ENCODE measurements at regions of chr5 and their contacts with region 1.

Region 1: DNA sequence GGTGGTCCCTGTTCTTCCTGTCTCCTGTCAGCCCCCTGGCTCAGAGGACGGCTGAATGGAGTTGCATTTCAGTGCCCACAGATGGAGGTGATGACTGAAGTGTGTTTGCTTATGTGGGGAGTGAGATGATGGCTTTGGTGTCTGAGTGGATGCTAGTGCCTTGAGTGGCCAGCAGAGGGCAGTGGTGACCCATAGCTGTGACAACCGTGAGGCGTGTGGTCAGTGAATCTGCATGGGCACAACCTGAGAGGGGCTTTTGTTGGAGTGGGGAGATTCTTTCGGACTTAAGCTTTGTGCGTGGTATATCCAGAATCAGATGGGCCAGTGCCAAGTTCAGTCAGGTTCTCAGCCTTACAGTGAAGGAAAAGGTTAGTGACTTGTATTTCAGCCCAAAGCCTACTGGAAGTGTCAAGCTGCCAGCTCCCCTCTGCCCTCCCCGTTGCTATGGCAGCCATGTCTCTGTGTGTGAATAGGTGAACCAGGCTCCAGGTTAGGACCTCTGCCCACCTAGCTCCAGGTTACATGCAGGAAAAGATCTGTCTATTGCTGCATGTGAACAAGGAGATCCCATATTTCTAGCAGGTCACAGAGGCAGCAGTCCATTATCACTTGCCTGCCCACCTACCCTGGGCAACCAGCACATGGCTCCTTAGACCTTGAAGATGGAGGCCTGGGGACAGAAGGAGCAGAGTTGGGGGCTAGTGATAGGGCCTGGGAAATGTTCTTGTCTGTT is 14.7 kb upstream of the CXXC5 start:
- DNase-seq: peak; percentile 54
- H3K4me3 ChIP-seq: no peak overlapping the region
- H3K27ac ChIP-seq: no peak overlapping the region
- H3K4me1 ChIP-seq: peaks cover 11% of the 10 kb centered on the region
- H3K27me3 ChIP-seq: no peaks in the 10 kb centered on the region
- CTCF ChIP-seq: peak; percentile 97 to 99 (median 98)
- POLR2A ChIP-seq: no peak

Region 2: DNA sequence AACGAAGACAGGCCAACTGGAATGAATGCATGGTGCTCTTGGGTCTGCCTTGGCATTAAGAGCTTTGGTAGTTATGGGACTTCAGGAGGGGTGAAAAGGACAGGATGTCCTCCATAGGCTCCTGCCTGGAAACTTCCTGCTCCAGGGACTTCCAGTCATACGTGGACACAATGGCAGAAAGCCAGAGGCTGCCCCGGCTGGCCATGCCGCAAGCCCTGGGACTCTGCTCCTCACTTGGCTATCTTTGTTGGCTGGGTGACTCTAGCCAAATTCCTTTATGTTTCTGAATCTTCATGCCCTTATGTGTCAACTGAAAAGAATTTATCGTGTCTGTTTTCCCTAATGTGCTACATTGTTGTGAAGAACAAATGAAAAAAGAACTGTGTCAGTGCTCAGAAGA is 572.2 kb before region 1 on chr5:
- intact Hi-C with region 1: no loop called
- DNase-seq: peak; percentile 18
- H3K4me3 ChIP-seq: no peak overlapping the region
- H3K27ac ChIP-seq: no peak overlapping the region
- H3K4me1 ChIP-seq: peaks cover 3% of the 10 kb centered on the region
- H3K27me3 ChIP-seq: no peaks in the 10 kb centered on the region
- CTCF ChIP-seq: no peak
- POLR2A ChIP-seq: no peak

Region 3: GRCh38 chr5:139690064-139690802 is 56.8 kb after region 1 on chr5:
- intact Hi-C with region 1: loop called (anchors 1 kb)
- DNase-seq: no peak
- H3K4me3 ChIP-seq: no peak overlapping the region
- H3K27ac ChIP-seq: no peak overlapping the region
- H3K4me1 ChIP-seq: no peaks in the 10 kb centered on the region
- H3K27me3 ChIP-seq: no peaks in the 10 kb centered on the region
- CTCF ChIP-seq: peak; percentile 50 to 82 (median 62)
- POLR2A ChIP-seq: no peak

Region 4: GRCh38 chr5:139795074-139796001 is 161.9 kb after region 1 on chr5 and contains the start of gene PSD2:
- intact Hi-C with region 1: no loop called
- DNase-seq: peak; percentile 35
- H3K4me3 ChIP-seq: peak within 1 kb of the TSS; percentile 27 to 41
- H3K27ac ChIP-seq: no peak within 1 kb of the TSS
- H3K4me1 ChIP-seq: no peaks in the 10 kb centered on the region
- H3K27me3 ChIP-seq: peaks cover 3% of the 10 kb centered on the region
- CTCF ChIP-seq: no peak
- POLR2A ChIP-seq: no peak
- total RNA-seq, gene PSD2: 0.46 to 0.74 TPM

Region 5: GRCh38 chr5:139949710-139950109 is 316.2 kb after region 1 on chr5:
- intact Hi-C with region 1: no loop called
- DNase-seq: no peak
- H3K4me3 ChIP-seq: no peak overlapping the region
- H3K27ac ChIP-seq: no peak overlapping the region
- H3K4me1 ChIP-seq: no peaks in the 10 kb centered on the region
- H3K27me3 ChIP-seq: no peaks in the 10 kb centered on the region
- CTCF ChIP-seq: no peak
- POLR2A ChIP-seq: no peak

Measured in prostate gland (tissue), 2 donors.